Heart right ventricle (tissue), 16 donors: ENCODE measurements at regions of chr5 and their contacts with region 1.

Region 1: GRCh38 chr5:59732301-59732700 is 161.2 kb downstream of the PDE4D start:
- DNase-seq: no peak
- ATAC-seq: no peak
- H3K4me3 ChIP-seq: no peak overlapping the region
- H3K27ac ChIP-seq: no peak overlapping the region
- H3K4me1 ChIP-seq: no peaks in the 10 kb centered on the region
- H3K27me3 ChIP-seq: no peaks in the 10 kb centered on the region
- CTCF ChIP-seq: no peak

Region 2: GRCh38 chr5:59079622-59080620 is 652.4 kb before region 1 on chr5:
- intact Hi-C with region 1: no loop called
- DNase-seq: peak in 1 of 2 donors; percentile 11
- ATAC-seq: peak; percentile 79 to 99 (median 88)
- H3K4me3 ChIP-seq: no peak overlapping the region
- H3K27ac ChIP-seq: peak overlapping the region in 5 of 10 donors; percentile 6 to 63 (median 20)
- H3K4me1 ChIP-seq: peaks cover 0 to 10% (median 0%) of the 10 kb centered on the region in 9 donors
- H3K27me3 ChIP-seq: no peaks in the 10 kb centered on the region
- CTCF ChIP-seq: no peak

Region 3: DNA sequence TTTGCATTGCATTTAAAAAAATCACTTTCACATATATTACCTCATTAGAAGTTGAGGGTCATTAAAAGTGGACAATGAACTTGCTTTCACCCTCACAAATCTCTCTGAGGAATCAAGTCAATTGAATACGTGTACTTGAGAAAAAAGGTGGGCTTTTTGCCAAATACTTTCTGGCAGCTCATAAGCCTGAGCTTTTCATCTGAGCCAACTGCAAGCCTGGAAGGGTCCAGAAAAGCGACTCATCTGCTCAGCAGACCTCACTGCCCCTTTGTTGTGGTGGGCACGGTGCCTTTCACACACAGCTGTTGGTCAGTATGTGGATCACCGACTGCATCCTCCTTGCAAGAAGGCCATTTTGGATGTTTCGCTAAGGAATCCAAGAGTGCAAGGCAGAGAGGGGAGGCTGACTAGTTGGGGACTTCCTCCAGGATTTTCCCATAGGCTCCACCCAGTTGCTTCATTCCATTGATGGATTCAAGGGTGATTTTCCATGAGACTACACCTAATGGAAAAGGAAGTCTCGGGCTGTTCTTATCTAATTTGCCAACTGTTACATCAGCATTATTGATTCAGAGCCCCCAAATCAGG is 403.5 kb before region 1 on chr5:
- intact Hi-C with region 1: no loop called
- DNase-seq: peak in 1 of 2 donors; percentile 20
- ATAC-seq: peak; percentile 29 to 81 (median 76)
- H3K4me3 ChIP-seq: peak overlapping the region in 1 of 10 donors; percentile 8
- H3K27ac ChIP-seq: peak overlapping the region in 4 of 10 donors; percentile 1 to 58 (median 13)
- H3K4me1 ChIP-seq: peaks cover 0 to 47% (median 26%) of the 10 kb centered on the region in 9 donors
- H3K27me3 ChIP-seq: no peaks in the 10 kb centered on the region
- CTCF ChIP-seq: no peak

Region 4: DNA sequence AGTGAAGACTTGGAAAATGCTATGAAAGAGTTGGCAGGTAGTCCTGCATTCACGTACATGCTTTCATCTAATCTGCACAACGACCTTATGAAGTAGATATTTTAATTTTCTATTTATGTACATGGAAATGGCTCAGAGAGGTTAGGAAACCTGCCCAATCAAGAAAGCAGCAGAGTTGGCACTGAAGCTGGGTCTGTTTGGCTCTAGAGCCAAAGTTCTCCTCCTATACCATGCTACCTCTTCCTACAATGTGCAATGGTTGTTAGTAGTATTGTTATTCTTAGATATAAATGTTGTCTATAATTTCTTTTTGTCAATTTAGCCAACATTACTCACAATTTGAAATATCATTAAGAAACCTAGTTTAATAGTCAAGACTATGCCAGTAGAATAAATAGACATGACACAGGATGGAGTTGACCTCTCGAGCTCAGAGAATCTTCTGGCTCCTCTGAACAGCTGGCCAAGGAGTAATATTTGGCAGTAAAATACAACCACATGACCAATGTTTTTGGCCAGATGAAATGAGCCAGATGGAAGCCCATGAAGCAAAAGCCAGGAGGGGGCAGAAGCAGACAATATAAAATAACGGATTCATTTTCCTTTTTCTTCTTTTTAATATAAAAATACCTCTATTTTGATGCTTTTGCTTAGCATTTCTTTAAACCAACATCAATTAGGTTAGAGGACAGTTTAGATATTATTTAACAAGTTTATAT is 381.1 kb before region 1 on chr5:
- intact Hi-C with region 1: no loop called
- DNase-seq: peak in 1 of 2 donors; percentile 48
- ATAC-seq: peak; percentile 84 to 96 (median 95)
- H3K4me3 ChIP-seq: peak overlapping the region in 1 of 10 donors; percentile 15
- H3K27ac ChIP-seq: peak overlapping the region in 5 of 10 donors; percentile 35 to 64 (median 57)
- H3K4me1 ChIP-seq: peaks cover 0 to 35% (median 23%) of the 10 kb centered on the region in 9 donors
- H3K27me3 ChIP-seq: no peaks in the 10 kb centered on the region
- CTCF ChIP-seq: peak in 7 of 9 donors; percentile 5 to 65 (median 45)

Region 5: GRCh38 chr5:59587489-59588337 is 144.6 kb before region 1 on chr5:
- intact Hi-C with region 1: loop called in 1 of 10 experiments (anchors 10 kb)
- DNase-seq: peak; percentile 43
- ATAC-seq: peak in 7 of 8 donors; percentile 52 to 98 (median 88)
- H3K4me3 ChIP-seq: peak overlapping the region in 9 of 10 donors; percentile 5 to 50 (median 41)
- H3K27ac ChIP-seq: no peak overlapping the region
- H3K4me1 ChIP-seq: peaks cover 0 to 15% (median 8%) of the 10 kb centered on the region in 9 donors
- H3K27me3 ChIP-seq: no peaks in the 10 kb centered on the region
- CTCF ChIP-seq: peak in 4 of 9 donors; percentile 7 to 33 (median 16)